Transverse colon (tissue), 4 donors: ENCODE measurements at regions of chr3 and their contacts with region 1.

Region 1: GRCh38 chr3:186617038-186617946 is 4.4 kb downstream of the AHSG start:
- DNase-seq: peak; percentile 84
- H3K4me3 ChIP-seq: no peak overlapping the region
- H3K27ac ChIP-seq: no peak overlapping the region
- H3K4me1 ChIP-seq: peaks cover 0 to 11% (median 4%) of the 10 kb centered on the region in 4 donors
- H3K27me3 ChIP-seq: peaks cover 25% of the 10 kb centered on the region
- CTCF ChIP-seq: peak; percentile 81 to 86 (median 84)
- EP300 ChIP-seq: no peak
- POLR2A ChIP-seq: no peak

Region 2: DNA sequence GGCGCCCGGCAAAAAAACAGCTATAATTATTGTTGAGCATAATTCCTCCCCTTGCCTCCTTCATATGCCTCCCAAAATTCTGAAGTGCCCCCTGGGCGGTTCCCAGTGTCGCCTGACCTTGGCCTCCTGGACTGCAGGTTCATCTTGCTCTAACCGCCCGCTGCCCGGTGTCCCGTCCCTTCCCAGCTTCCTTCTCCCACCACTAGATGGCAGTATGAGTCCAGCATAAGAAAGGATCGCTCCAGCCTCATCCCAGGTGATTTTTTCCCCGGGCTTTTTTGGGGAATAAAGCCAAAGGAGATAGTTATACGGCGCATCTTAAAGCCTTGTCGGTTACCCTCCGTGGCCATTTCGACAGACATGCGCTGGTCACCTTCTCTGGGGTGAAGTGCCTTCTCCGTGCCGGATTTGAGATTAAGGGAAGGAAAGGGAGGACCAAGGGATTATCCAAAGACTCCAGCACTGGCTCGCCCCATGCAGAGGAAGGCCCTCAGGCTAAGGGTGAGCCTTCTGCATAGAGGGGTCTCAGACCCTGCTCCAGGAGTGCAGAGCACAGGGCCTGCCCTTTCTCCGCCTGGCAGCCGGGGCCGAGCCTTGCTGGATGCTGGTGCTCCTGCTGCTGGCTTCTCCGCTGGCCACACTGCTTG is 633.7 kb before region 1 on chr3:
- in situ Hi-C with region 1: no loop called
- intact Hi-C with region 1: loop called (anchors 10 kb)
- DNase-seq: peak; percentile 75
- H3K4me3 ChIP-seq: no peak overlapping the region
- H3K27ac ChIP-seq: no peak overlapping the region
- H3K4me1 ChIP-seq: peaks cover 0 to 5% (median 2%) of the 10 kb centered on the region in 4 donors
- H3K27me3 ChIP-seq: peaks cover 7% of the 10 kb centered on the region
- CTCF ChIP-seq: peak; percentile 89 to 94 (median 92)
- EP300 ChIP-seq: no peak
- POLR2A ChIP-seq: no peak

Region 3: GRCh38 chr3:186806089-186807055 is 189.1 kb after region 1 on chr3 and contains the start of gene RFC4:
- in situ Hi-C with region 1: loop called in 3 of 4 experiments (anchors 10 to 25 kb)
- intact Hi-C with region 1: no loop called
- DNase-seq: peak; percentile 91
- H3K4me3 ChIP-seq: peak within 1 kb of the TSS; percentile 46 to 86 (median 59)
- H3K27ac ChIP-seq: peak within 1 kb of the TSS; percentile 83 to 92 (median 90)
- H3K4me1 ChIP-seq: peaks cover 6 to 20% (median 12%) of the 10 kb centered on the region in 4 donors
- H3K27me3 ChIP-seq: no peaks in the 10 kb centered on the region
- CTCF ChIP-seq: no peak
- EP300 ChIP-seq: peak; percentile 4
- POLR2A ChIP-seq: peak; percentile 57
- total RNA-seq, gene RFC4: 7.2 to 226 (median 10.5) TPM in 3 of 4 donors, not detected in the other

Region 4: DNA sequence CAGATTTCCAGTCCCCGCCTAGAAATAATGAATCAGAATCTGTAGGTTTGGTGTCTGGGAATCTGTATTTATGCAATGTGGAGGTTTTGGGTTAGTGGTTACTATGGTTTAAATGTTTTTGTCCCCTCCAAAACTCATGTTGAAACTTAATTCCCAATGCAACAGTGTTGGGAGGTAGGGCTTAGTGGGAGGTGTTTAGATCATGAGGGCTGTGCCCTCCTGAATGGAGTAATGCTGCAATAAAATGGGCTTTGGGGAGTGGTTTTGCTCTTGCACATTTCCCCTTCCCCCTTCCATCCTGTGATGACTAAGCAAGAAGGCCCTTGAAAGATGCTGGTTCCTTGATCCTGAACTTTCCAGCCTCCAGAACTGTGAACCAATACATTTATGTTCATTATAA is 198.1 kb after region 1 on chr3:
- in situ Hi-C with region 1: loop called in 3 of 4 experiments (anchors 10 to 25 kb)
- intact Hi-C with region 1: loop called (anchors 5 kb)
- DNase-seq: no peak
- H3K4me3 ChIP-seq: no peak overlapping the region
- H3K27ac ChIP-seq: no peak overlapping the region
- H3K4me1 ChIP-seq: no peaks in the 10 kb centered on the region
- H3K27me3 ChIP-seq: peaks cover 3% of the 10 kb centered on the region
- CTCF ChIP-seq: no peak
- EP300 ChIP-seq: no peak
- POLR2A ChIP-seq: no peak

Region 5: GRCh38 chr3:186821429-186822367 is 204.4 kb after region 1 on chr3:
- in situ Hi-C with region 1: loop called in 3 of 4 experiments (anchors 10 to 25 kb)
- intact Hi-C with region 1: loop called (anchors 5 kb)
- DNase-seq: no peak
- H3K4me3 ChIP-seq: no peak overlapping the region
- H3K27ac ChIP-seq: no peak overlapping the region
- H3K4me1 ChIP-seq: peaks cover 0 to 16% (median 5%) of the 10 kb centered on the region in 4 donors
- H3K27me3 ChIP-seq: peaks cover 30% of the 10 kb centered on the region
- CTCF ChIP-seq: peak; percentile 55 to 72 (median 64)
- EP300 ChIP-seq: no peak
- POLR2A ChIP-seq: no peak

Region 6: DNA sequence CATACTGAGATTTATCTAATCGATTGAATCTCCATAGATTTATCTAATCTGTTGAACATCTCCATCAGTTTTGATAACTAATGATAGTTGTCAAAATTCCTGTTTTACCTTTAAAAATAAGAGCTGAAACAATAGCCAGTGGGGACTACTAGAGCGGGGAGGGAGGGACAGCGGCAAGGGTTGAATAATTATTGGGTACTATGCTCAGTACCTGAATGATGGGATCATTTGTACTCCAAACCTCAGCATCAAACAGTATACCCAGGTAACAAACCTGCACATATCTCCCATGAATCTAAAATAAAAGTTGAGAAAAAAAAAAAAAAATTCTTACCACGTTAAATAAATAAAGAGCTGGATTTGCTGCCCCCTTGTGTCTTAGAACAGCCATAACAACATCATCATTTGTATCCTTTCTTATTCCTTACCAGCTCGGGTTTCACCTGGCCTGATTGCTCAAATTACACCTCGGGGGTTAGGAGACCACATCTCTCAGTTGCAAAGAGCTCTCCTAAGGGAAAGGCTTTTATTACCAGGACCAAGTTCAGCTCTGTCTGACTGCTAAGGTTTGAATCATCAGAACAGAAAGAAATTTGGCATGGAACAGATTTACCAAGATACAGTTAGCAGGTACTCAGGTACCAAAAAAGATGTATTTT is 547.7 kb after region 1 on chr3:
- in situ Hi-C with region 1: loop called (anchors 25 kb)
- intact Hi-C with region 1: no loop called
- DNase-seq: peak; percentile 16
- H3K4me3 ChIP-seq: no peak overlapping the region
- H3K27ac ChIP-seq: no peak overlapping the region
- H3K4me1 ChIP-seq: peaks cover 0 to 4% (median 0%) of the 10 kb centered on the region in 4 donors
- H3K27me3 ChIP-seq: no peaks in the 10 kb centered on the region
- CTCF ChIP-seq: peak; percentile 71 to 80 (median 75)
- EP300 ChIP-seq: no peak
- POLR2A ChIP-seq: no peak